Motor neuron (in vitro differentiated cells): ENCODE measurements at regions of chr3 and their contacts with region 1.

Region 1: GRCh38 chr3:190197346-190197763 is 76.7 kb upstream of the P3H2 start:
- ATAC-seq: no peak
- H3K4me3 ChIP-seq: no peak overlapping the region
- H3K27ac ChIP-seq: no peak overlapping the region
- H3K4me1 ChIP-seq: no peaks in the 10 kb centered on the region

Region 2: DNA sequence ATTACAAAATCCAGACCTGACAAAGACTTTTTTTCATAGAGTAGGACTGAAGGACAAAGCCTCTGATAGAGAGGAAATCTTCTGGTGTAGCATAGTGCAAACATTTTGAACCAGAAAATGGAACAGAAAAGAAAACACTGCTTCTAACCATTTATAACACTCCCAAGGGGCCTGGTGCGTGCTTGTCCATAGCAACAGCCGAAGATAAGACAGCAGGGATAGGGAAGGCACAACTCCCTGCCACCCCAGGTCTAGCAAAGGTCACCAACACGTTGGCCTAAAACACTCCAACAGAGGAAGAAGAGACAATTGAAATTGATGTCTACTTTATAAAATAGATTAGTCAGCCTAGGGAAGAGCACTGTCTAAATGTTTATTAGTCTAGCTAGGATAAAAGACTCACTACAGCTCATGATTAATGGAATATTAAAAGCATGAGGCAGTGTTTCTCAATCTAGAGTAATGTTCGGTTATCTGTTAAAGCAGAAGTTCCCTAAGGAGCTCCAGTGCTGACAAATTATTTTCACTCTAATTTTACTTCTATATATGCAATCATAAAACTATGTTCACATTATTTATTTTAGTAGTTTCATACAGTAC is 221.9 kb before region 1 on chr3:
- in situ Hi-C with region 1: loop called in 5 of 9 experiments (anchors 10 to 25 kb)
- ATAC-seq: peak in 5 of 8 experiments; percentile 67 to 95 (median 90)
- H3K4me3 ChIP-seq: no peak overlapping the region
- H3K27ac ChIP-seq: no peak overlapping the region
- H3K4me1 ChIP-seq: peaks cover 2 to 5% of the 10 kb centered on the region in 2 donors